Activated CD4-positive, alpha-beta T cell treated with anti-CD3 and anti-CD28 coated beads for 36 hours (primary cell): ENCODE measurements at regions of chr4 and their contacts with region 1.

Region 1: GRCh38 chr4:173039617-173040577 is 128.7 kb upstream of the GALNT7 start:
- DNase-seq: no peak
- ATAC-seq: no peak
- H3K4me3 Mint-ChIP-seq: no peak overlapping the region
- H3K27ac Mint-ChIP-seq: no peak overlapping the region
- H3K4me1 Mint-ChIP-seq: no peaks in the 10 kb centered on the region
- H3K27me3 Mint-ChIP-seq: peaks cover 11% of the 10 kb centered on the region

Region 2: GRCh38 chr4:172750910-172751309 is 289.0 kb before region 1 on chr4:
- CTCF ChIA-PET with region 1: no interaction called
- POLR2A ChIA-PET with region 1: no interaction called
- intact Hi-C with region 1: no loop called
- DNase-seq: no peak
- ATAC-seq: peak; percentile 92
- H3K4me3 Mint-ChIP-seq: no peak overlapping the region
- H3K27ac Mint-ChIP-seq: no peak overlapping the region
- H3K4me1 Mint-ChIP-seq: peaks cover 4% of the 10 kb centered on the region
- H3K27me3 Mint-ChIP-seq: peaks cover 4% of the 10 kb centered on the region

Region 3: DNA sequence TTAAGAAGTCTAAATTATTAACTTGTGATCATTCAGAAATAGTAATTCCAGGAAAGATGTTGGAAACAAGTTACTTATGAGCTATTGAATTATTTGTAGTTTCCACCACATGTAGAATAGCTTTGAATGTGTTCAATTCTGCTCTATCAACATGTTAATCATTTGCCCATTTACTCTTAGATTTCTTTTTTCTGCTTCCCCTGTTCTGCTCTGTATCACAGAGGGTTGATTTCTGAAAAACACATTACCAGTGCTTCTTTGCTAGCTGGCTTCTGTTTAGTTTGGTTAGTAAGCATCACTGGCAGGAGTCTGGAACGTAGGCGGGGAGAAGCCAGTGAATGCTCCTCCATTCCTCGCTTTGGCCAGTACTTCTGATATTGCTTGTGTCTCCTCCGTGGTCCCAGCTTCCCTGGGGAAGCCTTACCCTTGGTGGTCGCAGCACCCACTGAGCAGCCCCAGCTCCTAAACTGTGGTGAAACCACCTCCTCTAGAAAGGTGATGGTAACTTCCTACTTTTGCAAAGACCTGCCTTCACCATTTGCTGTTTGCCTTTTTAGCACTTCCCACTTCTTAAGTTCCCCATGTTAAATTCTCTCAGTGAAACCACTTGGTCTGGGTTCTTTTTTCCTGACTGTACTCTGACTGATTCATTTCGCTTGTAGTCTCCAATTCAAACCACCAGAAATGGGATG is 88.4 kb after region 1 on chr4:
- CTCF ChIA-PET with region 1: no interaction called
- POLR2A ChIA-PET with region 1: no interaction called
- intact Hi-C with region 1: loop called in 1 of 2 experiments (anchors 1 kb)
- DNase-seq: no peak
- ATAC-seq: no peak
- H3K4me3 Mint-ChIP-seq: no peak overlapping the region
- H3K27ac Mint-ChIP-seq: no peak overlapping the region
- H3K4me1 Mint-ChIP-seq: no peaks in the 10 kb centered on the region
- H3K27me3 Mint-ChIP-seq: no peaks in the 10 kb centered on the region